Aorta (tissue), 5 donors: ENCODE measurements at regions of chr19 and their contacts with region 1.

Region 1: GRCh38 chr19:44212250-44212865 is at the start of gene ZNF227:
- DNase-seq: peak; percentile 96 to 97
- ATAC-seq: peak; percentile 98
- H3K4me3 ChIP-seq: peak within 1 kb of the TSS; percentile 64 to 92
- H3K27ac ChIP-seq: peak within 1 kb of the TSS in 1 of 2 donors; percentile 60
- H3K4me1 ChIP-seq: peaks cover 0 to 3% of the 10 kb centered on the region in 2 donors
- H3K27me3 ChIP-seq: no peaks in the 10 kb centered on the region
- total RNA-seq, gene ZNF227: 17.9 to 27.5 TPM

Region 2: DNA sequence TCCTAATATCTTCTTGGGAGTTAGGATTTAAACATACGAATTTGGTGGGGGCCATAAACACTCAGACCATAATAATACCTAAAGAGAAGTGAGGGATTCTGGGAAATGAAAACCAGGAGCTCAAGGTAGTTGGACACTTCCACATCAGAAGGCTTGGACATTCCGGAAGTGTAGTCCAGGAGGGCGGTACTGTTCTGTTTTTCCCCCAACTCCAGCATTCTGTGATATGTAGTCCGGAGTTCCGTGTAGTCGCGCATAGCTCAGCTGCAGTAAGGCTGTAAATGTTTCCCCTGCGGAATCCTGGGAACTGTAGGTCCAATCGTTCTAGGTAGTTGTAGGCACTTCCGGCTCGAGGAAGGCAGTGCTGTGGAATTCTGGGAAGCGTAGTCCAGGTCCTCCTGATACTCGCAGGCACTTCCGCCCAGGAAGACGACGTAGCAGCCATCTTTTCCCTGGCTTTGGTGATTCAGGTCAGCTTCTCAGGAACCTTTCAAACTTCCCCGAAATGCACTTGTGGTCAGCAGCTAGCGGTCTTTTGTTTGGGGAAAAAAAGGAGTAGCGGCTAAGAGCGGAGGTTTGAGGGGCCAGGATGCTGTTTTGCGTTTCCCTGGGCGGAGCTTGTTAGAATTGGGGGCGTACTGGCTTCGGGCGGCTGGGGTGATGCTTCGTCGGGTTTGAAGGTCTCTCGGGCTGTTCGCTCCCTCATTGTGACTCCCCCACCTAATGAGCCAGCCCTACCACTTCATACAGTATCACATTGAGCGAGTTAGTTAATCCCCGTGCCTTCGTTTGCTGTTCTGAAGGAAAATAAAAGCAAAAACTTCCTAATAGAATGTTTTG is 47.5 kb before region 1 on chr19 and contains the start of gene ZNF226:
- intact Hi-C with region 1: loop called (anchors 2 kb)
- DNase-seq: peak; percentile 91 to 93
- ATAC-seq: peak; percentile 99
- H3K4me3 ChIP-seq: peak within 1 kb of the TSS; percentile 54 to 87
- H3K27ac ChIP-seq: peak within 1 kb of the TSS; percentile 60 to 85
- H3K4me1 ChIP-seq: peaks cover 2 to 4% of the 10 kb centered on the region in 2 donors
- H3K27me3 ChIP-seq: no peaks in the 10 kb centered on the region
- total RNA-seq, gene ZNF226: 15.8 to 23.6 TPM